Right cardiac atrium (tissue), 5 donors: ENCODE measurements at regions of chr1 and their contacts with region 1.

Region 1: GRCh38 chr1:19156676-19157075 is 53.4 kb downstream of the UBR4 start:
- DNase-seq: peak; percentile 68 to 75 (median 69)
- ATAC-seq: peak; percentile 81 to 94
- H3K4me3 ChIP-seq: no peak overlapping the region
- H3K27ac ChIP-seq: no peak overlapping the region
- H3K4me1 ChIP-seq: no peaks in the 10 kb centered on the region
- H3K27me3 ChIP-seq: no peaks in the 10 kb centered on the region

Region 2: GRCh38 chr1:19101244-19101643 is 55.4 kb before region 1 on chr1:
- intact Hi-C with region 1: loop called in 1 of 4 experiments (anchors 10 kb)
- DNase-seq: no peak
- ATAC-seq: no peak
- H3K4me3 ChIP-seq: no peak overlapping the region
- H3K27ac ChIP-seq: no peak overlapping the region
- H3K4me1 ChIP-seq: no peaks in the 10 kb centered on the region
- H3K27me3 ChIP-seq: no peaks in the 10 kb centered on the region